ENCODE measurements at regions of chr3 and their contacts with region 1.

Region 1: DNA sequence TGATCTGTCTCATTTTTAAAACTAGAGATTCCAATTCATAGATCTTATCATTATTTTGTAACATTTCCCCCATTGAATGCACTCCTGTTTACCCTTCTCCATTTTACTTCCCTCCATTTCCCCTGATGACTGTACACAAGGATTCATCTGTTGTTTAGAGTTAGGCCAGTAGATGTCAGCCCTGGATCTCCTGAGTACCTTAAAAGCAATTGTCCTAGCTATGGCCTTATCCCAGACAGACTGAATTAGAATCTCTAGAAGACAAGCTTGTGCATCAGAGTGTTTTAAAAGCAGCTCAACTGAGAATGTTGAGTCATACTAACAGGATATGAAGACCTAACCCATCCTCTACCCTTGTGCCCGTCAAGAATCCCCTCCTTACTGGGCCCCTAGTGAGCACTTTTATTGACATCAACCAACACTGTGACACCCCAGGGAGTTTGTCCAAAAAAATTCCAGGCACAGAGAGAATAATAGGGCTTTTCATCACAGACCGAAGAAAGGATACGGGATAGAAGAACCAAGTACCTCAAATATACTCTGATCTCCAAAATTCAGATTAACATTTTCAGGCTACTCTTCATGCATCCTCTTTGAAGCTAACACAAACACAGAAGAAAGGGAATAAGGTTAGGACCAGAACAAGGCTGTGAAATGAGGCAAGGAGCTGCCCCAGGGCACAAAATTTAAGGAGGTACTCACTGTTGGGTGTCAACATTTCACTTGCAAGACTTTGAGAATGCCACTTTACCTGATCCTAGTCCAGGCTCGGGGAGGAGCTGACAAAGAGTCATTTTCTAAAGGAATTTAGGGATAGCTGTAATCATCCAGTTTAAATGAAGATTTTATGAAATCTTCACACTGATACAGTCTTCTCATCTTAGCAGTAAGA is 17.1 kb downstream of the ZBED2 start:
- DNase-seq: peak; percentile 38
- H3K4me3 Mint-ChIP-seq: peak overlapping the region; percentile 18
- H3K27ac Mint-ChIP-seq: peak overlapping the region; percentile 90
- H3K4me1 Mint-ChIP-seq: peaks cover 75% of the 10 kb centered on the region
- H3K27me3 Mint-ChIP-seq: no peaks in the 10 kb centered on the region

Region 2: GRCh38 chr3:111594205-111594604 is 16.2 kb after region 1 on chr3:
- CTCF ChIA-PET with region 1: interaction called, 25 read pairs
- intact Hi-C with region 1: loop called (anchors 1 kb)
- DNase-seq: no peak
- H3K4me3 Mint-ChIP-seq: peak overlapping the region; percentile 94
- H3K27ac Mint-ChIP-seq: peak overlapping the region; percentile 98
- H3K4me1 Mint-ChIP-seq: peaks cover 52% of the 10 kb centered on the region
- H3K27me3 Mint-ChIP-seq: no peaks in the 10 kb centered on the region

Region 3: DNA sequence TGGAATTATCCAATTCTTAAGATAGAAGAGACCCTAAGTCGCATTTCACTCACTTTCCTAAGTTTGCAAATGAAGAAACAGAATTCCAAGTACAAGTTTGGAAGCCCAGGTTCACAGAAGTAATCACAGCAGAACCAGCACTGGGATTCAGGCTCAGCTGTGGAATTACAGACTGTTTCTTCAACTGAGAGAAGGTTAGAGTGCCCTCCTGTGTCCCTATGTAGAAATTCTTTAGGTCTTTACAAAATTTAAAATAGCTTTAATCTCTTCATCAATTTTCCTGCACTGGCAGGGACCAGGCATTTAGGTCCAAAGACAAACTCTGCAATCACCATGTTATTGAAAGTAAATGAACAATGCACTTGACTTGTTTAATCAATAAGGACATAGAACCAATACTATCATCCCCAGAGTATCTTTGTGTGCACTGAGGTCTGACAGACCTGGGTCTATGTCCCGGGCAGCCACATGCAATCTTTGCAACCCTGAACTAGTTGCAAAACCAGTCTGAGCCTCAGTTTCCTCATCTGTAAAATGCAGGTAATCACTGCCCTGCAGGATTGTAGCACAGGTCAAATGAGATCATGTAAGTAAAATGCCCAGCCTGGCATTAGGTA is 113.4 kb after region 1 on chr3:
- CTCF ChIA-PET with region 1: interaction called, 15 read pairs
- intact Hi-C with region 1: loop called (anchors 2 kb)
- DNase-seq: no peak
- H3K4me3 Mint-ChIP-seq: no peak overlapping the region
- H3K27ac Mint-ChIP-seq: no peak overlapping the region
- H3K4me1 Mint-ChIP-seq: peaks cover 44% of the 10 kb centered on the region
- H3K27me3 Mint-ChIP-seq: no peaks in the 10 kb centered on the region

Region 4: DNA sequence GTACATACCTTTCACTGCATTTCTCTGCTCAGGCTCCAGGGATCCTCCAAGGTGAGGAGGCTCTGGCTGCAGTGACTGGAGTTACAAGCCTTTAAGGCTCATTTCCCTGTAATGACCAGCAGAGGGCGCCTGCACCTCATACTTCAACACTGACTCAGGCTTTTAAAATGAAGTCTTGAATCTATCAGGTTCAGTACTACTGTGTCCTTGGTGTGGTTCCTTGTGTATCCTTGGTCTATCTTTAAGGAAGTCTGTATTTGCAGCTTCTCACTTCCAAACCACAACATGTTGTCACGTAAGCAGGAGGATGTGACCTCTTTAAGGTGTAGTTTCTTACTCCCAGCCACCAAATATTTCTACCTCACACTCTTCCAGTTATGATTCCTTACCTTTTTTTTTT is 139.6 kb after region 1 on chr3:
- CTCF ChIA-PET with region 1: interaction called, 17 read pairs
- intact Hi-C with region 1: loop called (anchors 1 kb)
- DNase-seq: peak; percentile 83
- H3K4me3 Mint-ChIP-seq: no peak overlapping the region
- H3K27ac Mint-ChIP-seq: no peak overlapping the region
- H3K4me1 Mint-ChIP-seq: no peaks in the 10 kb centered on the region
- H3K27me3 Mint-ChIP-seq: no peaks in the 10 kb centered on the region

Region 5: DNA sequence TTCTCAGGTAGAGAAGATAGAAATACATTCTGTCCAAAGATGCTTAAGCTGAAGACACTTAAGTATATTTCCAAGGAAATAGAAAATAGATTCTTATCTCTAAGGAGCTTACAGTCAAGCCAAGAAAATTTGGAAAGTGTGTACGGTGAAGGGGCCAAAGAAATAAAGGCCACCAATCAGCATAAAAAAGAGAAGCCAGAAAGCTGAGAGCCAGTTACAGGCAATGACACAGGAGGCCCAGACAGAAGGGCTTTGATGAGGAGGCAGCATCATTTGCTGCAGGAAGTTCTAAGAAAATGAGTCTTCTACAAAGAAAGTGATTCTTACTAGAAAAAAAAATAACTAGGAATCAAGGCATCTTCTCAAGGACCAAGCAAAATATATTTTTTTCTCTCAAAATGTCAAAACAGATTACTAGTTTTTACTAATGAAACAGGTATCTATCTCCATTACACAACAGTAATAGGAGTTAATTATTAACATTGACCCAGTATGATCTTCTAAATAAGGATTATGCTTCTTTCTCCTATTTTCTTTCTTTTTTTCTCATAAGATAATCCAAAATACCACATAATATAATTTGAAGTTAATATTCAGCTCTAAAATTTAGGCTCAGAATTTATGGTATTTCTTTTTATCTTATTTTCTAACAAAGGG is 198.9 kb after region 1 on chr3:
- CTCF ChIA-PET with region 1: no interaction called
- intact Hi-C with region 1: no loop called
- DNase-seq: no peak
- H3K4me3 Mint-ChIP-seq: no peak overlapping the region
- H3K27ac Mint-ChIP-seq: no peak overlapping the region
- H3K4me1 Mint-ChIP-seq: no peaks in the 10 kb centered on the region
- H3K27me3 Mint-ChIP-seq: no peaks in the 10 kb centered on the region

Region 6: DNA sequence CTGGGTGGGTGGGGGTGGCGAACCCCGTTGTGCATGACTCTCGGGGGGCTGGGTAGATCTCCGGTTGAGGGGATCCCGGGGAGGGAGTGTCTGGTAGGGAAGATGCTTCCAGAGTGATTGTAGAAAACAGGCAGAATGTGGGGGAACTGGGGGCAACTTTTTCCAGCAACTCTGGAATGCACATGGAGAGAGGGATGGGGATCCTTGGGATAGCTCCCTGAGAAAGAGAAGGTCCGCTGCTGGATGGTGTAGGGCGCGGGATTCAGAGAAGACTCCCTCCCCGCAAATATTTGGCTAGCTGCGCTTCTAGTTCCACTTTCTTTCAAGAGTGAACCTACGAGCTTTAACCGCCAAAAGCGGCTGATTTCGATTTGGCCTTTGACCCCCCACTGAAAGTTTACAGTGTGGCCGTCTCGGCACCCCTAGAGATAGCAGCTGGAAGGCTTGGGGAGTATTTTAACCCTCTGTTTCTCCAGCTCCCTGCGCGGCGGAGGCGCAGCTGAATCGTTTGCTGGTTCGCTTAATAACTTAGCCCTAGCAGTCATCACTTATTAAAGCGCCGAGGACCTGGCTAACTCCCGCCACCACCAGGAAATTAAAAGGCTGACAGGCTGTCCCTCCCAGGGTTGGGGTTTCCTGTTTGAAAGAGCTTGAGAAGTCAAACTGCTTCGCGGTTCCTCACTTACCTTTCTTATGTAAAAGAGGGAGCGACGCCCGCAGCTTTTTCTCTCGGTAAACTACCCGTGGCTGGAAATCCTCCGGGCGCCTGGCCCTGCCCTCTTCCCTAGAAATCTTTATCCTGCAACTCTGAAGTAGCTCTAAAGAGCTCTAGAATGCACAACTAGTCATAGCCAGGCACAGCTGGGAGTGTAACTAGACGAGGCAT is 282.2 kb after region 1 on chr3:
- CTCF ChIA-PET with region 1: no interaction called
- intact Hi-C with region 1: loop called (anchors 5 kb)
- DNase-seq: peak; percentile 75
- H3K4me3 Mint-ChIP-seq: peak overlapping the region; percentile 84
- H3K27ac Mint-ChIP-seq: no peak overlapping the region
- H3K4me1 Mint-ChIP-seq: peaks cover 10% of the 10 kb centered on the region
- H3K27me3 Mint-ChIP-seq: peaks cover 45% of the 10 kb centered on the region

Measured in activated naive CD4-positive, alpha-beta T cell treated with anti-CD3 and anti-CD28 coated beads for 36 hours (primary cell).